ENCODE measurements at regions of chr2 and their contacts with region 1.

Region 1: DNA sequence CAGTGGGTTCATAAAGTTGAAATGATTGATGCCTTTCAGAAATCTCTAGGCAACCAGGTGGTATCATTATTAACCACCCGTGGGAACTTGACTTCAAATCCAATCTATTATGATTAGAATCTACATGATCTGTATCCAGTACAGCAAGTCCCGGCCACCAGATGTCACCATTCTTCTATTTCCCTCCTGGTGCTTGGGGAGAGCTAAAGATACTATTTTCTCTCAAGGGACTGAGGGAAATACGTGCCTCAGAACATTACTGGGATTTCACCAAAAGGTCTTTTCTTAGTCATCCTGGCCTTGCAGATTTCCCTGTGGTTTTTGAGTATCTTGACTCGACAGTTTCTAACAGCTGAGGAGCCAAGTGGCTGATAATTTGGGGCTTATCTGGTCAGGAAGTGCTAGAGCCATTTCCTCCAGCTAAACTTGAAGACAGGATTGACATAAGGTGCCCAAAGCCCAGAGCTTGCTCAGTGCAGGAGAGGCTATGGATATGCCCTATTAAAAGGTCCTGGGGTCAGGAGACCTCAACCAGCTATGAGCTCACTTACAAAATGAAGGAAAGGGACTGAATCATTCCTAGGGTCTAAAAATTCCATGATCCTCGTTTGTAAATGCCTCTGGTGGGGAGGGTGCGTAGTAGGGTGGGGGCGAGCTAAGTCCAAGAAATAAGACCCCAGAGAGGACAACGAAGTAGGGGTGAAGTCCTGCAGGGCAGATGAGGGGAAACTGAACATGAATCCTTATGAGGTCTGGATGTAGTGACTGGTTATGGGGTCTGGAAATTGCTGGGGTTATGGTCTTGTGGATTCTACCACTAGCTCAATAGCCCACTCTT is 135.4 kb upstream of the MGAT5 start:
- DNase-seq: peak; percentile 90
- H3K4me3 ChIP-seq: no peak overlapping the region
- H3K27ac ChIP-seq: no peak overlapping the region
- H3K4me1 ChIP-seq: peaks cover 18% of the 10 kb centered on the region
- H3K27me3 ChIP-seq: no peaks in the 10 kb centered on the region
- CTCF ChIP-seq: peak; percentile 76 to 87

Region 2: DNA sequence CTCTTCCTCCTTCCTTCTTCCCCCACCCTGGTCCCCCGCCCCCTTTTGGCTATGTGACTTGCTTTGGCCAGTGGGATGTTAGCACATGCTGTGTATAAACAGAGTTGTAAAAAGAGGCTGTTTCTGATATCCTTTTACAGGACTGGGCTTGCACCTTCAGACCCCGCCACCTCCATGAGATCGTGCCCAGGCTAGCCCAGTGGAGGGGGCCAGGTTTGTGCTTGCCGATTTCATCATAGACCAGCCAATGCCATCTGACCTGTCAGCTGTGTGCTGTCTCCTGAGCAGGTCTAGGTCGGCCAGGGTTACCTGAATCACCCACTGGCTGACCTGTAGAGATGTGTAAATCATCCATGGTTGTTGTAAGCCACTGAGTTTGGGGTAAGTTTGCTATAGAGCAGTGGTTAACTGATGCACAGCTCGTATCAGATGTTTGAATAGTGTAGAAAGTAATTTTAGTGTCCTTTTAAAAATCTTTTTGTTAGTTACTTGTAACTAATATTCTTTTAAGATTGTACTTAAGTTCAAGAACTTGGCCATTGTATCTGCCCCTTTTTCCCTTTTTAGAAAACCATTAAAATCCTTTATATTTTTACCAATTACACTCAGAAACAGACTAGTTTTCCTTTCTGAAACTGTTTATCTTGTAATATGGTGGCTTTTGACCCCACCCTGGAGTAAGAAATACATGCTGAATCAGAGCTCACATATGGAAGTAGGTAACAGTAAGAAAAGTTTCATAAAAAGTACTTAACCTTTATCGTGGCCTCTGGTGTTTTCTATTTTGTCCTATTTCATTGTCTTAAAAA is 13.4 kb after region 1 on chr2:
- CTCF ChIA-PET with region 1: interaction called, 5 read pairs
- dilution Hi-C with region 1: no loop called
- in situ Hi-C with region 1: no loop called
- intact Hi-C with region 1: loop called (anchors 1 kb)
- DNase-seq: peak; percentile 93
- H3K4me3 ChIP-seq: no peak overlapping the region
- H3K27ac ChIP-seq: peak overlapping the region; percentile 22
- H3K4me1 ChIP-seq: peaks cover 17% of the 10 kb centered on the region
- H3K27me3 ChIP-seq: no peaks in the 10 kb centered on the region
- CTCF ChIP-seq: no peak

Region 3: DNA sequence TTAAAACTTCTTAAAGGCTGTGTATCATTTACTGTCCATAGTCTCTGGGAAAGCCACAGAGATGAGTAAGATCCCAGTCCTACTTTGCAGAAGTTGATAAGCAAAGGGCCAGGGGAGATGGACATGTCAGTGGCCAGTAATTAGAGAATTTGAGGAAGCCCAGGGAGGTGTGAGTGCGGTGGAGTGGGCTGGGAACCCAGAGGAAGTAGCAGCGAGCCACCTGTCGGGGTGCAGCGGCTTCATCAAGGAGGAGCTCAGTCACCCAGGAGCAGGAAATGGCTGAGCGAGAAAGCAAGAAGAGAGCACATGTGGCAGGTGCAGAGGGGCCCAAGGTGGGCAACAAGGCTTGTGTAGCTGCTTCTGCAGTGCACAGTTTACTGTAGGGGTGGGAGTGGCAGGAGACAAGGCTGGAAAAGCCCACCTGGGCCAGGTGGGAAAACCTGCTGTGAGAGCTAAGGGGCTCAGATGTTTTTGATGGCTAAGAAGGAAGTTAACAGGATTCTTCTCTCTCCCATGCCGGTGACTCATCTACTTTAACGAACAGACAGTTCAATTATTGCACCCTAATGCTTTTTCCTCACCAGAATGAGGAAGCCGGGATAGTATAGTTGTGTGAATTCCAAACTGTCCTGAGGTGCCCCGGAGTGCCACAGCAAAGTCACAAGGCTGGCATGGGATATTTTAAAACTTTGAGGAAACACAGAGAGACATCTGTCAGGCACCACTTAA is 100.6 kb after region 1 on chr2:
- CTCF ChIA-PET with region 1: no interaction called
- dilution Hi-C with region 1: loop called (anchors 5 kb)
- in situ Hi-C with region 1: loop called in 1 of 2 experiments (anchors 5 kb)
- intact Hi-C with region 1: no loop called
- DNase-seq: no peak
- H3K4me3 ChIP-seq: no peak overlapping the region
- H3K27ac ChIP-seq: no peak overlapping the region
- H3K4me1 ChIP-seq: peaks cover 5% of the 10 kb centered on the region
- H3K27me3 ChIP-seq: no peaks in the 10 kb centered on the region
- CTCF ChIP-seq: no peak

Region 4: GRCh38 chr2:134405611-134406081 is 287.1 kb after region 1 on chr2:
- CTCF ChIA-PET with region 1: no interaction called
- dilution Hi-C with region 1: no loop called
- in situ Hi-C with region 1: loop called (anchors 10 to 25 kb)
- intact Hi-C with region 1: loop called (anchors 1 kb)
- DNase-seq: peak; percentile 91
- H3K4me3 ChIP-seq: no peak overlapping the region
- H3K27ac ChIP-seq: peak overlapping the region; percentile 77
- H3K4me1 ChIP-seq: peaks cover 54% of the 10 kb centered on the region
- H3K27me3 ChIP-seq: no peaks in the 10 kb centered on the region
- CTCF ChIP-seq: no peak

Region 5: GRCh38 chr2:134451347-134451630 is 332.8 kb after region 1 on chr2:
- CTCF ChIA-PET with region 1: no interaction called
- dilution Hi-C with region 1: no loop called
- in situ Hi-C with region 1: no loop called
- intact Hi-C with region 1: loop called (anchors 1 kb)
- DNase-seq: no peak
- H3K4me3 ChIP-seq: no peak overlapping the region
- H3K27ac ChIP-seq: no peak overlapping the region
- H3K4me1 ChIP-seq: peaks cover 4% of the 10 kb centered on the region
- H3K27me3 ChIP-seq: no peaks in the 10 kb centered on the region
- CTCF ChIP-seq: no peak

Region 6: DNA sequence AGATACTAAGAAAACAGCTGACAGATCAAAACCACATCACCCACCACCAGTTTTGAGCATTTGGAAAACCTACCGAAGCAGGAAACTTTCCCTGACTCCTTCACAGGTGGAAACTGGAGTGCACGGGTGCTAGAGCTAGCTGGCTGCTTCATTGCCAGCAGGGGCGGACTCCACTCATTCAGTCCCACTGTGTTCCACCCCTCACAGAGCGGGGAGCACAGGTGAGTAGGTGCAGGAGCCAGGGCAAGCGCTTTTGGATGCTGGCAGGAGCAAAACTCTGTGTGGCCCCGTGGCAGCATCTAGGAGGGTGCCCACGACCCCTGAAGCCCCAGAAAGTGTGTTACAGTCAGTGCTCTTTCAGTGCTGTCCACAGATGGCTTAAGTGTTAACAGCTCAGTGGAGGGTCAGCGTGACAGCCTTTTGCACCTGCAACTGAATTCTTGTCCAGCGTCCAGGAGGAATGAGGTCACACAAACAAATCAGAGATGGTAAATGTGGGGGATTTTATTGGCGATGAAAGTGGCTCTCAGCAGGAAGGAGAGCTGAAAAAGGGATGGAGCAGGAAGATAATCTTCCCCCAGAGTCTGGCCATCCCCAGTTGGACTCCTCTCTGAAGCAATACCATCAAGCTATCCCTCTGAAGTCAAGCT is 529.2 kb after region 1 on chr2:
- CTCF ChIA-PET with region 1: no interaction called
- dilution Hi-C with region 1: no loop called
- in situ Hi-C with region 1: no loop called
- intact Hi-C with region 1: no loop called
- DNase-seq: no peak
- H3K4me3 ChIP-seq: no peak overlapping the region
- H3K27ac ChIP-seq: no peak overlapping the region
- H3K4me1 ChIP-seq: no peaks in the 10 kb centered on the region
- H3K27me3 ChIP-seq: peaks cover 2% of the 10 kb centered on the region
- CTCF ChIP-seq: no peak

Region 7: GRCh38 chr2:134918526-134919340 is 800.2 kb after region 1 on chr2 and contains the start of gene CCNT2:
- CTCF ChIA-PET with region 1: no interaction called
- dilution Hi-C with region 1: no loop called
- in situ Hi-C with region 1: loop called in 1 of 2 experiments (anchors 25 kb)
- intact Hi-C with region 1: no loop called
- DNase-seq: peak; percentile 99
- H3K4me3 ChIP-seq: peak within 1 kb of the TSS; percentile 91 to 96 (median 92)
- H3K27ac ChIP-seq: peak within 1 kb of the TSS; percentile 91
- H3K4me1 ChIP-seq: peaks cover 8% of the 10 kb centered on the region
- H3K27me3 ChIP-seq: no peaks in the 10 kb centered on the region
- CTCF ChIP-seq: no peak
- total RNA-seq, gene CCNT2: 27.3 to 31.0 TPM

Measured in mammary epithelial cell (primary cell).